GM10248 (cell line): ENCODE measurements at regions of chr2 and their contacts with region 1.

Region 1: DNA sequence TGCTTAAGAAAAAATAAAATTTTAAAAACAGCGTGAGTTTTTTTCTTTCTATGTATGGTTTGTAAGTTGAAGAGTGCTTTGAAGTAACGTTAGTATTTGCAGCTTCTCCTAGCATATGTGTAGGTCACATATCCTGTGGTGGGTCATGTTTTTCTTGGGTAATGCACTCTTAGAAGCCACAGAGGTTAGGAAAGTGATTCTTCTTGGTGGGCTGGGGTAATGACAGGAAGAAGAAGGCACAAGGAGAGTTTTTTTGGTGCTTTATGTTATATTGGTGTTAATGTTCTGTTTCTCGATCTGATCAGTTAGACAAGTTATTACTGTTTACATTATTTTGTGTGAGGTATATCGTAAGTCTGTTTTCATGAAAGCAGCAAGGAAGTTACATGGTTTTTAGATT is 109.0 kb downstream of the ICA1L start:
- DNase-seq: no peak
- CTCF ChIP-seq: no peak

Region 2: GRCh38 chr2:201257956-201258665 is 1504.4 kb before region 1 on chr2:
- CTCF ChIA-PET with region 1: no interaction called
- POLR2A ChIA-PET with region 1: interaction called, 10 read pairs
- DNase-seq: peak; percentile 71
- CTCF ChIP-seq: no peak